Right cardiac atrium (tissue), 5 donors: ENCODE measurements at regions of chr15 and their contacts with region 1.

Region 1: DNA sequence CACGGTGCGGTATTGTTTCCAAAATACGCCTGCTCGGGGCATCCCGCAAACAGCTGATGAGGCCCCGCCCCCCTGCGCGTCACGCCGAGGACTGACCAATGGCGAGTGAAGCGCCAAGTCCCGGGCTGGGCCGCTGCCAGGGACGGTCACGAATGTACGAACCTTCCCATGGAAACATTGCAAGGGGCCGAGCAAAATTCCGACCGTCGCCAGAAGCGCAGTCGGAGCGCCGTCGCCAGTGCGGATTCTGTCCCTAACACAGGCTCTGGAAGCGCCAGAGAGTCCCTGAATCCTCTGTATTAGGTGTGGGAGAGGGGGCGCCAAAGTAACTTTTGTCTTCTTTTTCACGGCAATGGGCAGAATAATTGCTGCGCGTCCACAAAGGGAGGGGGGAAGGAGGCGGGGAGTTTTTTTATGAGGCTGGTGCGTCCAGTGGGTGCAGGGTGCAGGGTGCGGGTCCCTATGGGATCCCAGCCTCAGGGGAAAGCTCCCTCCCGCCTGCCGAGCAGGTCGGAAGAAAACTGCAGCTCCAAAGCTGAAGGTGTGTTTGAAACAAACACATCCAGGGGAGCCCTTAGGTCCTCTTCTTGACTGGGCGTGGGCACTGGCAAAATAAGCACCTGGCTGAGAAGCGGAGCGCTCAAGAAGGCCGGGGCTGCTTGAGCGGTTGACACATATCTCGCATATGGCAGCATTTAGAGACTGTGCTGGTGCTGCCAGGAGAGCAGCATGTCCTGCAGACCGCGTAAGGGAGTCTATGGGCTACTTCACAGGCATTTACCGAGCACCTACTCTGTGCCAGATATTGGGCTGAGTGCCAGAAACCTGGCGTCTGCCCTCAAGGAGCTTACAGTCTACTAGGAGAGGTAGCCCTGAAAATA is at the start of gene BMF:
- DNase-seq: peak; percentile 100
- ATAC-seq: peak; percentile 83 to 87
- H3K4me3 ChIP-seq: peak within 1 kb of the TSS; percentile 85
- H3K27ac ChIP-seq: peak within 1 kb of the TSS; percentile 65
- H3K4me1 ChIP-seq: peaks cover 25% of the 10 kb centered on the region
- H3K27me3 ChIP-seq: no peaks in the 10 kb centered on the region
- total RNA-seq, gene BMF: 3.0 to 9.9 (median 8.5) TPM

Region 2: DNA sequence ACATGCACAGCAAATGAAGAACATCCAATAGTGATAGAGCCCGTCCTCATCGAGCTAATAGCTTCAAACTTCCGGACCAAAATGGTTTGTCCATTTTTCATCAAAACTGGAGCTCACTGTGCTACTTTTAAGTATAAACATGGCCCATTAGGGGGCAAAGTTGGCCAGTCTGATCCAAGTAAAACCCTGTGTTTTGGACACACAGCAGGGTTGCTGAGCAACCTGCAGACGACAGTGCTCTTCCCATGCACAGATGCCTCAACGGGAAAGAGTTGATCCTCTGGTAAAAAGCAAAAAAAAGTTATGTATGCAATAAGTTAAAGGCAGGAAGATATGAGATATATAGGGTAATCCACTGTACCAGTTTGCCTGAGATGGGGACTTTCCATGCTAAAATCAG is 772.2 kb before region 1 on chr15:
- intact Hi-C with region 1: no loop called
- DNase-seq: no peak
- ATAC-seq: no peak
- H3K4me3 ChIP-seq: no peak overlapping the region
- H3K27ac ChIP-seq: no peak overlapping the region
- H3K4me1 ChIP-seq: no peaks in the 10 kb centered on the region
- H3K27me3 ChIP-seq: no peaks in the 10 kb centered on the region

Region 3: GRCh38 chr15:40044717-40045571 is 64.2 kb before region 1 on chr15:
- intact Hi-C with region 1: loop called in 3 of 4 experiments (anchors 5 to 10 kb)
- DNase-seq: peak; percentile 91 to 96 (median 96)
- ATAC-seq: peak; percentile 91 to 95
- H3K4me3 ChIP-seq: no peak overlapping the region
- H3K27ac ChIP-seq: no peak overlapping the region
- H3K4me1 ChIP-seq: peaks cover 9% of the 10 kb centered on the region
- H3K27me3 ChIP-seq: no peaks in the 10 kb centered on the region

Region 4: DNA sequence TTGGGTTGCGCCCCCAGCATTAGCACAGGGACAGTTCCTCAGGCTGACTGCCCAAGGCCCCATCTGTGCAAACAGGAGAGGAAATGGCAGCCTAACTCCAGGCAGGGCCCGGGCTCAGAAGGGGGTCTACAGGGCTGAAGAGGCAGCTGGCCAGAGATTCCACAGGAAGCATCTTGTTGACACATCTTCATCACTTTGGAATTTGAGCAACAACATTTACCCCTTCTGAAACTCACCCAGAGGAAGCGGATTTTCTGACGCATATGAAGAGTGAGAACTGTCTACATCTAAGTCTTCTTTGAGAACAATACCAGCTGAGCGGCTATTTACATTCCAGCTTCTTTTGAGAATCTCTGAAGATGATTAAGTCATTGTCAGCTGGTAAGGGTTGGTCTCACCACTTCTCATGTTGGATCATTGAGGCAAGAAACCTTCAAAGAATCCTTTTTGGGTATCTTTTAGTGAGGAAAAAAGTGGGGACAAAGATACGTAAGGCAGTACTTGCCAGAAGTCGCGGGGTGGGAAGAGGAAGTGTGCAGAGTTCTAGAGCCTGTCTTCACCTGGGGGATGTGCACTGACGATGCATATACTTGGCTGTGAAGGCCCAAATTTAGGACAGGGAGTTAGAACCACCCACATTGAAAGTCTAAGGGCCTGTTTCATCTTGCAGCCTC is 44.7 kb before region 1 on chr15:
- intact Hi-C with region 1: loop called in 1 of 4 experiments (anchors 5 kb)
- DNase-seq: no peak
- ATAC-seq: no peak
- H3K4me3 ChIP-seq: no peak overlapping the region
- H3K27ac ChIP-seq: no peak overlapping the region
- H3K4me1 ChIP-seq: peaks cover 5% of the 10 kb centered on the region
- H3K27me3 ChIP-seq: no peaks in the 10 kb centered on the region

Region 5: DNA sequence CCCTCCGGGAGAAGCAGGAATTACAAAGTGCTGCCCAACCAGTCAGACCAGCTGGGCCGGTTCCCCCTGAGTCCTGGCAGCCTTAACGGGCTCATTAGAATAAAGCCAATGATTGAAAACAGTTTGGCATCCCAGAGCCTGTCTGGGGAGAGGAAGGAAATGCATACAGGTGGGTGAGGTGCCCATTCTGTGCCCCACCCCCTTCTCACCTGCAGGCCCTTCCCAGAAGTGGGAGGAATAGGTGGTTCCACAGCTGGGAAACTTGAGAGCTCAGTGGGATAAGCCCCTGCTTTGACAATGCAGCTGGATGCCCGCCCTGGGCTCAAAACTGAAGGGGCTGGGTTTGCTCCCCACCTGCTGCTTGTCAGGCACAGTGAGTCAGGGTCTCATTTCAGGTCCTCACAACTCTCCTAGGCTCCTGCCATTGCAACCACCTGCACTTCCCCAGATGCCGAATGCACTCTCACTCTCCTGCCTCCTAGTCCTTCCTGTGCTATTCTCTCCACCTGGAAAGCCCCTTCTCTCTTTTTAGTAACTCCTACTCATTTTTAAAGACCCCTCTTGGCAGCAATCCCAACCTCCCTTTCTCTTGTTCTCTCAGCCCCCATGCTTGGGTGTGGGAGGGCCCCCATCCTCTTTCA is 46.3 kb after region 1 on chr15:
- intact Hi-C with region 1: loop called in 1 of 4 experiments (anchors 5 kb)
- DNase-seq: no peak
- ATAC-seq: peak in 1 of 2 donors; percentile 14
- H3K4me3 ChIP-seq: no peak overlapping the region
- H3K27ac ChIP-seq: no peak overlapping the region
- H3K4me1 ChIP-seq: no peaks in the 10 kb centered on the region
- H3K27me3 ChIP-seq: no peaks in the 10 kb centered on the region